ENCODE measurements at regions of chr1 and their contacts with region 1.

Region 1: DNA sequence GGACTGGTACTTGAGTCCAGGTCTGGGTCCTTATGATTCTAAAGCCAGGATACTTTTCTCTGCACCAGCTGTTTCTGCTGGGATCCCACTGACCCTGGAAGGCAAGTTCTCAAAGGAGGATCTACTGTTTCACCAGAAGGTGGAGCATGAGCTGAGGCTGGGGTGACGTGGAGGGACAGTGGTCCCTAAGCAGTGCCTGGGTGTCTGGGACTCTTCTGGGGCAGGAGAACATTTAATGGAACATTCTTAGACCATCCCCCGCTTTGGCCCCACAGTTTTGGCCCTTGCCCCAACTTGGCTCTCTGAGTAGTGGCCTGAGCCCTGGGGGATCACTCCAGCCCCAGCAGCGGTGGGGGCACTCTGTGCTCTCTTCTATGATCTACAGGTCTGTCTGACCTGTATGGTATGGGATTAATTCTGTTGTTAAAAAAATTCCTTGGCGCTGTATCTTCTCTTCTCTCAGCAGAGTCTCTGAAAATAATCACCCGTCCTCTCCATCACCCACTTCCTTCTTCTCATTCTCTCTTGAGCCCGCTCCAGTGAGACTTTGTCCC is 60.3 kb upstream of the CSF3R start:
- DNase-seq: no peak
- ATAC-seq: peak; percentile 97
- H3K4me3 ChIP-seq: no peak overlapping the region
- H3K27ac ChIP-seq: no peak overlapping the region
- H3K4me1 ChIP-seq: no peaks in the 10 kb centered on the region
- H3K27me3 ChIP-seq: peaks cover 15% of the 10 kb centered on the region
- CTCF ChIP-seq: peak; percentile 4 to 68 (median 56); a peak in 4 of 6 replicates
- POLR2A ChIP-seq: no peak
- RAD21 ChIP-seq: no peak

Region 2: GRCh38 chr1:36516372-36517325 is 26.4 kb before region 1 on chr1:
- CTCF ChIA-PET with region 1: interaction called, 16 read pairs
- POLR2A ChIA-PET with region 1: no interaction called
- RAD21 ChIA-PET with region 1: no interaction called
- intact Hi-C with region 1: no loop called
- DNase-seq: peak; percentile 39
- ATAC-seq: peak; percentile 88
- H3K4me3 ChIP-seq: no peak overlapping the region
- H3K27ac ChIP-seq: no peak overlapping the region
- H3K4me1 ChIP-seq: peaks cover 0 to 9% of the 10 kb centered on the region in 2 experiments; a peak in 2 of 4 replicates
- H3K27me3 ChIP-seq: no peaks in the 10 kb centered on the region
- CTCF ChIP-seq: peak; percentile 75 to 93 (median 91); a peak in 5 of 6 replicates
- POLR2A ChIP-seq: no peak
- RAD21 ChIP-seq: peak; percentile 89

Region 3: DNA sequence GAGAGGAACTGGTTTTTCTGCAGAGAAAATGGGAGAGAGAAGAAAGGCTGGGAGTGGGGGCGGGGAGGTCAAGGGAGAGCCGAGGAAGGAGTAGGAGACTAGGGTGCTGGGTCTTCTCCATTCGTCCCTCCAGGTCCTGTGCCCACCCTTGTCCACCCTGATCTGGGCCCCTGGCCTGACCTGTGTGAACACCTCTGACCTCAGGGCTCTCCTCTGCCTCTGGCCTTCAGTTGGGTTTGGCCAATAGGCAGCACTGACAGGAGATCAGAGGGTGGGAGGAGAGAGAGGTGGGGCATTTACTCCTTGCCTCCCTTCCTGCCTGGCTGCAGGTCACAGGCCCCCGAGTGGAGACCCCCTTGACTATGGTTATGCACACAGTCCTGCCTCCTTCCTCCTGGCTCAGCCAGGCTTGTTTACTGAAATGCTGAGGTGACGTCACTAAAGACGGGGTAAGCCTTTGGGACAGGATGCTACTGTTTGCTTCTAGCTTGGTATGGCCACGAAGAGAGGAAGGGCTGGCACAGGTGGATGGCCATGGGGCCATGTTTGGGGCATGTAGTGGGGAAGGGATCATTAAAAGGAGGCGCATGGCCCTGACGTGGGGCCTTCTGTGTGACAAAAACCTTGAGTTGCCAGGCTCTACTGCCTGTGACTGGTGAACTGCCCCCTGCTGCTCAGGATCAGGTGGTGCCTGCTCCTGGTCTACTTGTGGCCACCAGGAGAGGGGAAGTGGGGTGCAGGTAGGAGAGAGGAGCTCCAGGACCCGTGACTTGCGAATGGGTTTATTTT is 188.4 kb after region 1 on chr1:
- CTCF ChIA-PET with region 1: no interaction called
- POLR2A ChIA-PET with region 1: no interaction called
- RAD21 ChIA-PET with region 1: no interaction called
- intact Hi-C with region 1: no loop called
- DNase-seq: no peak
- ATAC-seq: peak; percentile 80
- H3K4me3 ChIP-seq: no peak overlapping the region
- H3K27ac ChIP-seq: no peak overlapping the region
- H3K4me1 ChIP-seq: no peaks in the 10 kb centered on the region
- H3K27me3 ChIP-seq: peaks cover 11% of the 10 kb centered on the region; the same call in 1 of the 2 replicates
- CTCF ChIP-seq: peak in 2 of 3 experiments; percentile 37 to 50; a peak in 4 of 6 replicates
- POLR2A ChIP-seq: no peak
- RAD21 ChIP-seq: no peak

Measured in HCT116 (cell line).